ENCODE measurements at regions of chr22 and their contacts with region 1.

Region 1: GRCh38 chr22:36065775-36066559 is 37.3 kb upstream of the RBFOX2 start:
- DNase-seq: peak; percentile 61 to 85
- ATAC-seq: peak; percentile 89 to 93
- H3K4me3 ChIP-seq: peak overlapping the region; percentile 60 to 71 (median 63)
- H3K27ac ChIP-seq: peak overlapping the region; percentile 76 to 82 (median 79)
- H3K4me1 ChIP-seq: peaks cover 0 to 5% of the 10 kb centered on the region in 2 donors
- H3K27me3 ChIP-seq: no peaks in the 10 kb centered on the region
- CTCF ChIP-seq: peak; percentile 99 to 100 (median 100)
- POLR2A ChIP-seq: no peak

Region 2: GRCh38 chr22:35739076-35739930 is 326.7 kb before region 1 on chr22:
- in situ Hi-C with region 1: no loop called
- intact Hi-C with region 1: loop called (anchors 5 kb)
- DNase-seq: peak in 1 of 2 donors; percentile 48
- ATAC-seq: peak; percentile 28 to 35
- H3K4me3 ChIP-seq: no peak overlapping the region
- H3K27ac ChIP-seq: peak overlapping the region; percentile 46 to 87 (median 82)
- H3K4me1 ChIP-seq: peaks cover 45 to 46% of the 10 kb centered on the region in 2 donors
- H3K27me3 ChIP-seq: no peaks in the 10 kb centered on the region
- CTCF ChIP-seq: peak in 4 of 5 experiments; percentile 22 to 62 (median 42)
- POLR2A ChIP-seq: no peak

Region 3: DNA sequence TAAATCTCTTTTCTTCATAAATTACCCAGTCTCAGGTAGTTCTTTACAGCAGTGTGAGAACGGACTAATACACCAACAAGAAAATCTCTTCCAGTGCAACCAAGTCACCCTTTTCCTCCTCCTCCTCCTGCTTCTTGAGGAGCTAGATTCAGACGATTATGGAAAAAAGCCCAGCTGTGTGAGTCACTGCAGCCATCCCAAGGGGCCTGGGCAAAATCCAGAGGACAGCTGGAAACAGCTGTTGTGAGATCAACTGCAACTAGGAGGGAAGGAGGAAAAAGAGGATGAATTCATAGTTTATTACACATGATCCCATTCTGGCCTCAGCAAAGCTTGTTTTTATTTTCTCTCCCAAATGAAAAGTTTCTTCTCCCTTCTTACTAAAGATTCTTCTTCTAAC is 70.2 kb before region 1 on chr22:
- in situ Hi-C with region 1: no loop called
- intact Hi-C with region 1: no loop called
- DNase-seq: peak; percentile 50 to 72
- ATAC-seq: peak; percentile 87 to 90
- H3K4me3 ChIP-seq: no peak overlapping the region
- H3K27ac ChIP-seq: peak overlapping the region; percentile 51 to 66 (median 58)
- H3K4me1 ChIP-seq: peaks cover 9 to 10% of the 10 kb centered on the region in 2 donors
- H3K27me3 ChIP-seq: no peaks in the 10 kb centered on the region
- CTCF ChIP-seq: no peak
- POLR2A ChIP-seq: no peak

Region 4: GRCh38 chr22:36028646-36029405 is 37.1 kb before region 1 on chr22 and contains the start of gene RBFOX2:
- in situ Hi-C with region 1: no loop called
- intact Hi-C with region 1: loop called (anchors 1 kb)
- DNase-seq: peak; percentile 96 to 97
- ATAC-seq: peak; percentile 90 to 91
- H3K4me3 ChIP-seq: peak within 1 kb of the TSS; percentile 72 to 80 (median 74)
- H3K27ac ChIP-seq: peak within 1 kb of the TSS; percentile 83 to 92 (median 86)
- H3K4me1 ChIP-seq: peaks cover 13 to 15% of the 10 kb centered on the region in 2 donors
- H3K27me3 ChIP-seq: no peaks in the 10 kb centered on the region
- CTCF ChIP-seq: no peak
- POLR2A ChIP-seq: peak; percentile 56 to 67
- total RNA-seq, gene RBFOX2: 26.0 to 32.1 (median 28.6) TPM